Activated CD4-positive, alpha-beta T cell treated with anti-CD3 and anti-CD28 coated beads, Interleukin-2, amount 10 ng/mL, durations not matched to agents 7 days and 5 days (primary cell): ENCODE measurements at regions of chr20 and their contacts with region 1.

Region 1: DNA sequence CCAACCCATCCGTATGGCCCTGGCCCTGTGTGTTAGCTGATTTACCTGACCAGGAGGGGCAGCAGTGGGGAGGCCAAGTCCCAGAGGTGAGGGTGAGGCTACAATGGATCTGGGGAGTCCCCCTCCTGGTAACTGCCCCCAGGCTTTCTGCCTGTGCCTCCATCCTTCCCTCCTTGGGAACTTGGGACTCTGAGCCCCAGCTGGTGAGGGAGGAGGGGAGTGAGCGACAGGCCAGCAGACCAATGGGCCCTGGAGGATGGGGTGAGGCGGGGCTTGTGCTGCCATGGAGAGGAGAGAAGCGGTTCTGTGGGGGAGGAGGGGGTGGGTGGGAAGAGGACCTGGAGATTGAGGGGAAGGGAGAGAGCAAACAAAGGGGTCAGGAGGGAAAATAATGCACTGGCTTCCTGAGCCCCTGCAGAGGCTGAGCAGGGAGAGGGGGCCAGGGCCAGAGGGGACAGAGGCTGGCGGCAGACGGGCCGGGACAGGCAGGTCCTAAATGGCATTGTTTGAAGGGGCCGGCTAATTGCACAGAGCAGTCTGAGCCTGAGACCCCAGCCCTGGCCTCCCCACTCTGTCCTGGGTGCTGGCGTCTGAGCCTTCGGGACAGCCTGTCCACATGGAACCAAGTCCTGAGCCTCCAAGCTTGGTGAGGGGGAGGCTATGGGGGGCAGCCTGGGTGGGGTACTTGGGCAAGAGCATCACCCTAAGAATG is 17.5 kb downstream of the DNMT3B start:
- DNase-seq: no peak
- H3K4me3 Mint-ChIP-seq: no peak overlapping the region
- H3K27ac Mint-ChIP-seq: no peak overlapping the region
- H3K4me1 Mint-ChIP-seq: peaks cover 9% of the 10 kb centered on the region
- H3K27me3 Mint-ChIP-seq: no peaks in the 10 kb centered on the region

Region 2: DNA sequence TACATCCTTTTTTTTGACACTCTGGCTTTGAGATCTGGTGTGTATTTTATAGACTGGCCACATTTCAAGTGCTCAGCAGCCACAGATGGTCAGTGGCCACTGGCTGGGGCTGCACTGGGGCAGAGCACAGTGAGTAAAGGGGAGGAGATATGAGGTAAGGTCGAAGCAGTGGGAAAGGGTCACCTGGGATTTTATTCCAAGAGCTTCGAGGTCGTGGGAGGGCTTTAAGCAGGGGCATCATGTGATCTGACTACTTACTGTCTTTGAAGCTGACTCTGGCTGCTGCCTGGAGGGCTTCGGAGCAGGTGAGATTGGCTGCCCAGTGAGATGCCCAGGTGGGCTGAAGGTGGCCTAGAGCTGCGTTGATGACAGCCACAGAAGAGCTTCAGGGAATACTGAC is 112.6 kb before region 1 on chr20:
- CTCF ChIA-PET with region 1: interaction called, 87 read pairs
- POLR2A ChIA-PET with region 1: no interaction called
- DNase-seq: no peak
- H3K4me3 Mint-ChIP-seq: no peak overlapping the region
- H3K27ac Mint-ChIP-seq: no peak overlapping the region
- H3K4me1 Mint-ChIP-seq: peaks cover 8% of the 10 kb centered on the region
- H3K27me3 Mint-ChIP-seq: no peaks in the 10 kb centered on the region

Region 3: GRCh38 chr20:32681175-32682084 is 98.2 kb before region 1 on chr20:
- CTCF ChIA-PET with region 1: interaction called, 11 read pairs
- POLR2A ChIA-PET with region 1: no interaction called
- DNase-seq: peak; percentile 9
- H3K4me3 Mint-ChIP-seq: no peak overlapping the region
- H3K27ac Mint-ChIP-seq: peak overlapping the region; percentile 75
- H3K4me1 Mint-ChIP-seq: peaks cover 22% of the 10 kb centered on the region
- H3K27me3 Mint-ChIP-seq: no peaks in the 10 kb centered on the region

Region 4: DNA sequence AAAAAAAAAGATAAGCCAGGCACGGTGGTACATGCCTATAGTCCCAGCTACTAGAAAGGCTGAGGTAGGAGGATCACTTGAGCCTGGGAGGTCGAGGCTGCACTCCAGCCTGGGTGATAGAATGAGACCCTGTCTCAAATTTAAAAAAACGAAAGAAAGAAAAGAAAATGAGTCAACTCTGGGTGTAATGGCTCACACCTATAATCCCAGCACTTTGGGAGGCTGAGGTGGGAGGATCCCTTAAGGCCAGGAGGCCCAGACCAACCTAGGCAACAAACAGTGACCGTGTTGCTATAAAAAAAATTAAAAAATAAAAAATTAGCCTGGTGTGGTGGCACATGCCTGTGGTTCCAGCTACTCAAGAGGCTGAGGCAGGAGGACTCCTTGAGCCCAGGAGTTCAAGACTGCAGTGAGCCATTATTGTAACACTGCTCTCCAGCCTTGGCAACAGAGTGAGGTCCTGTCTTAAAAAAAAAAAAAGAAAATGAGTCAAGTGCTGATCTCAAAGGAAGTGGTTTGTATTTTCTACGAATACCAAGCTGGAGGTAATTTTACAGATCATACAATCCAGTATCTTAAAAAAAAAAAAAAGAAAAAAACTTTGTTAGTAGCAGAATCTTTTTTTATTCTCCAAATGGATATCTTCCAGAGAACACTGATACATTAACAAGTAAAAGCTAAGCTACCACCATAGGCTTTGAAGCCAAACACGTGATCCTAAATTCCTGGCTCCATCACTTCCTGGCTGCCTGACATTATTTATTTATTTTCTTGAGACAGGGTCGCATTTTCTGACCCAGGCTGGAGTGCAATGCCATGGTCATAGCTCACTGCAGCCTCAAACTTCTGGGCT is 42.1 kb before region 1 on chr20:
- CTCF ChIA-PET with region 1: interaction called, 20 read pairs
- POLR2A ChIA-PET with region 1: no interaction called
- DNase-seq: peak; percentile 58
- H3K4me3 Mint-ChIP-seq: peak overlapping the region; percentile 27
- H3K27ac Mint-ChIP-seq: peak overlapping the region; percentile 91
- H3K4me1 Mint-ChIP-seq: peaks cover 55% of the 10 kb centered on the region
- H3K27me3 Mint-ChIP-seq: no peaks in the 10 kb centered on the region

Region 5: DNA sequence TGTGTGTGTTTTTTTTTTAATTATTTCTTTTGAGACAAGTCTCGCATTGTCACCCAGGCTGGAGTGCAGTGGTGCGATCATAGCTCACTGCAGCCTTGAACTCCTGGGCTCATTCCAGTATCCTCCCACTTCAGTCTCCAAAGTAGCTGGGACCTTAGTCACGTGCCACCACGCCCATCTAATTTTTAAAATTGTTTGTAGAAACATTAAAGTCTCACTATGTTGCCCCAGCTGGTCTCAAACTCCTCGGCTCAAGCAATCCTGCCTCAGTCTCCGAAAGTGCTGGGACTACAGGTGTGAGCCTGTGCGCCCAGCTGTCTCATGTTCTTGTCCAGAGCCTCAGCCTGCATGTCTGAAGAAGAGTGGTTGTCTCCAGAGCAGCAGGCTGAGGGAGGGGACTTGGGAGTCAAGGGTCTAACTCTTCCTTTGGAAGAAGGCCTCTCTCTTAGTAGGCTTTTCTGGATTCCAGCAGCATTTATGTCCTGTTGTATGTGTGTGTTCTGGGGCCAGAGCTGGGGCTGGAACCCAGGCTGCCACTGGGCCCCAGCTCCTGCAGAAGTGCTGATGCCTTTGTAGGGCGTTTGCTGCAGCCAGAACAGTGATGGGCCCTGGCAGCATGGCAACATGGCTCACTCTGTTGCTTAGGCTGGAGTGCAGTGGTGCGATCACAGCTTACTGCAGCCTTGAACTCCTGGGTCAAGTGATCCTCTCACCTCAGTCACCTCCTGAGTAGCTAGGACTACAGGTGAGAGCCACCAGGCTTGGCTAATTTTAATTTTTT is 12.0 kb before region 1 on chr20:
- CTCF ChIA-PET with region 1: interaction called, 24 read pairs
- POLR2A ChIA-PET with region 1: no interaction called
- DNase-seq: no peak
- H3K4me3 Mint-ChIP-seq: no peak overlapping the region
- H3K27ac Mint-ChIP-seq: no peak overlapping the region
- H3K4me1 Mint-ChIP-seq: peaks cover 23% of the 10 kb centered on the region
- H3K27me3 Mint-ChIP-seq: peaks cover 10% of the 10 kb centered on the region

Region 6: DNA sequence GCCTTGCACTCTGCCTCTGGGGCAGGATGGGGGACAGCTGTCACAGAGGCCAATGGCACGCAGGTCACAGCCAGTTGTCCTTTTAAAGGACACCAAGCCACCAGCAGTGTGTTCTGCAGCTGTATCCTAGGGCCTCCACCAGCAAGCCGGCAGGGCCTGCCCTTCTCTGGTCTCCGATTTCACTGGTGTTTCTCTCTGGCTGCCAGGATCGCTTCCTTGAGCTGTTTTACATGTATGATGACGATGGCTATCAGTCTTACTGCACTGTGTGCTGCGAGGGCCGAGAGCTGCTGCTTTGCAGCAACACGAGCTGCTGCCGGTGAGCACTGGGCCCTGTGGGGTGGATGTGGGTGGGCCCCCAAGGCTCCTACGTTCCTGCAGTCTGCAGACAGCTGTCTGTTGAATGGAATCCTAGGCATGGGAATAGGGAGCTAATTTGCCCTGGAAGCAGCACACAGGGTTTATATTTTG is 17.4 kb after region 1 on chr20:
- CTCF ChIA-PET with region 1: interaction called, 14 read pairs
- POLR2A ChIA-PET with region 1: no interaction called
- DNase-seq: no peak
- H3K4me3 Mint-ChIP-seq: no peak overlapping the region
- H3K27ac Mint-ChIP-seq: peak overlapping the region; percentile 54
- H3K4me1 Mint-ChIP-seq: peaks cover 29% of the 10 kb centered on the region
- H3K27me3 Mint-ChIP-seq: no peaks in the 10 kb centered on the region